PC-9 (cell line): ENCODE measurements at regions of chr6 and their contacts with region 1.

Region 1: DNA sequence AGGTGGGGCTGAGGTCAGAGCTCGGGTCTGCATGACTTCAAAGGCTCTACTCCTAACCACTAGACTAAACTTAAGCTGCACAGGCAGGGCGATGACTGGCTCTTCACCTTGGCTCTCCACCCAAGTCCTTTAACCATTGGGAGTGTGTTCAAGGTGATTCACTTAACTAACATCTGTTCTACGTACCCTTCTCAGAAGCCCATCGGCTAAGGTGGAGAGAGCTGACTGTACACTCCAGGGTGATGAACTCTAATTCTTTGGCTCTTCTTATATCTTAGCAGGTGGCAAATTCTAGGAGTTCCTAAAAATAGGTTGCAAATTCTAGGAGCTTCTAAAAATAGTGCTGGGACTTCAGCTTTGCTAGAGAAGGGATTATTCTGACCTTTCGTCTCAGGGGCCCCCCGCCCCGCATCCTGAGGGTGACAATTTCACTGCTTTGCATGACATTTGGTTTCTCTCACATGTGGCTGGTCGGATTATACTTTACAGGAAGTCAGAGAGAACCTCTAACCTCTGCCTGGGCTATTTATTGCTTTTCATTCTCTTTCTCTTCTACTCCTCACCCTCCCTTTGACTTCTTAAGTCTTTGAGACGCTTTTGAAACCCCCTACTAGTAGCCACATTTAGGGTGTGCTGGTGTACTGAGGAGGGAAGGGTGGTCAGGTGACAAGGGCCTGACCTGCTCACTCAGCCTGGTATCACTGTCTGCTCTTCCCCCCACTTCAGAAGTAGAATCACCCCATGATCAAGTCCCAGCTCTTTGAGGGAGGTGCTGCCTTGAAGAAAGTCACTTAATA is 55.5 kb downstream of the PRDM1 start:
- DNase-seq: no peak
- H3K4me3 ChIP-seq: no peak overlapping the region
- H3K27ac ChIP-seq: no peak overlapping the region
- H3K4me1 ChIP-seq: peaks cover 29% of the 10 kb centered on the region
- H3K27me3 ChIP-seq: no peaks in the 10 kb centered on the region
- CTCF ChIP-seq: no peak

Region 2: GRCh38 chr6:105992315-105992961 is 149.2 kb before region 1 on chr6:
- CTCF ChIA-PET with region 1: no interaction called
- POLR2A ChIA-PET with region 1: no interaction called
- intact Hi-C with region 1: no loop called
- DNase-seq: peak; percentile 54 to 83
- H3K4me3 ChIP-seq: peak overlapping the region; percentile 83
- H3K27ac ChIP-seq: no peak overlapping the region
- H3K4me1 ChIP-seq: 0 out of 2 replicates have a peak, but pooled peaks cover 4% of the 10 kb centered on the region
- H3K27me3 ChIP-seq: no peaks in the 10 kb centered on the region
- CTCF ChIP-seq: 0 out of 2 replicates have a peak, but pooled peaks have one; percentile 15

Region 3: DNA sequence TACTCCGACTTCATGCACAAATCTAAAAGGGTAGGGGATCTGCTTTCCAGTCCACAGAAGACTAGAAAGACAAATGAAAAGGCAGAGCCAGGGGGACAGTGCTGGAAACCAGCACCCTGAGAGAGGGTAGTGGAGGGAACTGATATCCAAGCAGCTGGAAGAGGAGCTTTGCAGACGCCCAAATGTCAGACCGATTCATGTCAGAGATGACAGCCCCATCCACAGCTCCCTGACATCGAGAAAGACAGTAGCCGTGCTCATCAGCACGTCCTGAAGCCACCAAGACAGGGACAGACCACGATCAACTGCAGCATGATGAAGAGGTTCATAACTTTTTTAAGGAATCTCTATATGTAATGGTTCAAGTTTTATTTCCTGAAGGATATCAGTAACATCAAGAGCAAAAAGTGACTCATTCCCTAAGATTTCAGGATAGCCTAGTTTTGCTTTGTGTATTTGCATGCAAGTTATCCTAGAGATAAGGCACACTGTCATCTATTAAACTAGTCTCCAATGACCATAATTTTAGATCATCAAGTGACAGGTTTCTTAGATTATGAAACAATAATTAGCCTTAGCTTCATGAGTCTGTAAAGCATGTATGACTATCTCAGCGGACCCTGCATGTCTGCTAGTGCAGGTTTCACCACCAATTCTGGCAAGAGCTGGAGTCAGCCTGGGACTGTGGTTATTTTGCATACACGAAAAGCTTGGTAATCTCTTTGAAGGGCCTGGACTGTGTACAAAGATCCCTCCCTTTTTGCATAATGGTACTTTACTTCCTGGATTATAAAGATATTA is 12.5 kb before region 1 on chr6:
- CTCF ChIA-PET with region 1: interaction called, 4 read pairs
- POLR2A ChIA-PET with region 1: interaction called, 25 read pairs
- intact Hi-C with region 1: no loop called
- DNase-seq: peak; percentile 60 to 98
- H3K4me3 ChIP-seq: peak overlapping the region; percentile 32; the same call in 1 of the 2 replicates
- H3K27ac ChIP-seq: peak overlapping the region; percentile 84
- H3K4me1 ChIP-seq: peaks cover 34% of the 10 kb centered on the region
- H3K27me3 ChIP-seq: no peaks in the 10 kb centered on the region
- CTCF ChIP-seq: no peak

Region 4: GRCh38 chr6:106194949-106195921 is 53.6 kb after region 1 on chr6:
- CTCF ChIA-PET with region 1: no interaction called
- POLR2A ChIA-PET with region 1: no interaction called
- intact Hi-C with region 1: loop called (anchors 5 kb)
- DNase-seq: peak; percentile 4 to 94
- H3K4me3 ChIP-seq: 0 out of 2 replicates have a peak overlapping the region, but pooled peaks have one; percentile 10
- H3K27ac ChIP-seq: peak overlapping the region; percentile 92
- H3K4me1 ChIP-seq: peaks cover 25% of the 10 kb centered on the region
- H3K27me3 ChIP-seq: no peaks in the 10 kb centered on the region
- CTCF ChIP-seq: no peak